ENCODE measurements at regions of chr6 and their contacts with region 1.

Region 1: DNA sequence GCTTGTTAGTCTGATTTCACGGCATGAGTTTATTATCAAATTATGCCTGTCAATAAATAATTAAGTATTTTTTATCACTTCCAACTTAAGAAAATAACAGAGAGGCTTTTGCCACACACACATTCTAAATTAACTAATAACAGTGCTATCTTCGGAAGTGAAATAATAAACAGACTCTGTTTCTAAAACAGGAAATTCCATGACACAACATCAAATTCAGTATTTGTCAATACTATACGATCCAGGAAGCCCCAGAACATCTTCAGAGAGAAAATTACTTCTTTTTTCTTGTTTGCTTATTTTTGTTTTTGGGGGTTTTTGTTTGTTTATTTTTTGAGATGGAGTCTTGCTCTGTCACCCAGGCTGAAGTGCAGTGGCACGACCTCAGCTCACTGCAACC is 150.7 kb upstream of the PRDM1 start:
- DNase-seq: no peak
- H3K4me3 ChIP-seq: no peak overlapping the region
- H3K4me3 Mint-ChIP-seq: no peak overlapping the region
- H3K27ac Mint-ChIP-seq: peak overlapping the region; percentile 49
- H3K4me1 ChIP-seq: peaks cover 24% of the 10 kb centered on the region
- H3K4me1 Mint-ChIP-seq: peaks cover 19% of the 10 kb centered on the region
- H3K27me3 ChIP-seq: no peaks in the 10 kb centered on the region
- H3K27me3 Mint-ChIP-seq: no peaks in the 10 kb centered on the region
- CTCF ChIP-seq: no peak

Region 2: DNA sequence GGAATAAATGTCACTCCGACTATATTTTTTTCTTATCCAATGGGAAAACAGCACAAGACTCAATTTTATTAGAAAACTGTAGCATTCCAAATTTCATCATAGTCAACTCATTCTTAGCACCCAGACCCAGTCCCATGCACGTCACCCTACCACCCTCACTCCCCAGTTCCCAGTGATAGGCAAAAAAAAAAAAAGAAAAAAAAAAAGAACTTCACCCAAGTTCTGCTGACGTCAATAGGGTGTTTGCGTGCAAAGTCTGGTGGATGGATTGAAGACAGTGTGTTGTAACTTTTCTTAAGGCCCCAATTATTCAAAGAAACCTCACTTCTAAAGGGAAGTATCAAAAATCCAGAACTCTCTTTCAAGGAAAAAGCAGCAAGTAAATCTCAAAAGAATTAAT is 63.2 kb before region 1 on chr6:
- CTCF ChIA-PET with region 1: no interaction called
- POLR2A ChIA-PET with region 1: no interaction called
- intact Hi-C with region 1: loop called (anchors 1 kb)
- DNase-seq: no peak
- H3K4me3 ChIP-seq: no peak overlapping the region
- H3K4me3 Mint-ChIP-seq: no peak overlapping the region
- H3K27ac Mint-ChIP-seq: no peak overlapping the region
- H3K4me1 ChIP-seq: peaks cover 33% of the 10 kb centered on the region
- H3K4me1 Mint-ChIP-seq: peaks cover 27% of the 10 kb centered on the region
- H3K27me3 ChIP-seq: no peaks in the 10 kb centered on the region
- H3K27me3 Mint-ChIP-seq: no peaks in the 10 kb centered on the region
- CTCF ChIP-seq: no peak

Region 3: GRCh38 chr6:105967917-105968584 is 32.6 kb after region 1 on chr6:
- CTCF ChIA-PET with region 1: no interaction called
- POLR2A ChIA-PET with region 1: no interaction called
- intact Hi-C with region 1: loop called (anchors 2 kb)
- DNase-seq: no peak
- H3K4me3 ChIP-seq: no peak overlapping the region
- H3K4me3 Mint-ChIP-seq: no peak overlapping the region
- H3K27ac Mint-ChIP-seq: peak overlapping the region; percentile 16
- H3K4me1 ChIP-seq: peaks cover 22% of the 10 kb centered on the region
- H3K4me1 Mint-ChIP-seq: peaks cover 24% of the 10 kb centered on the region
- H3K27me3 ChIP-seq: no peaks in the 10 kb centered on the region
- H3K27me3 Mint-ChIP-seq: no peaks in the 10 kb centered on the region
- CTCF ChIP-seq: no peak

Region 4: GRCh38 chr6:105992315-105992961 is 57.0 kb after region 1 on chr6:
- CTCF ChIA-PET with region 1: no interaction called
- POLR2A ChIA-PET with region 1: no interaction called
- intact Hi-C with region 1: loop called (anchors 5 kb)
- DNase-seq: peak; percentile 75 to 88
- H3K4me3 ChIP-seq: peak overlapping the region; percentile 51
- H3K4me3 Mint-ChIP-seq: peak overlapping the region; percentile 73
- H3K27ac Mint-ChIP-seq: peak overlapping the region; percentile 73
- H3K4me1 ChIP-seq: peaks cover 16% of the 10 kb centered on the region; the same call in 1 of the 2 replicates
- H3K4me1 Mint-ChIP-seq: peaks cover 33% of the 10 kb centered on the region
- H3K27me3 ChIP-seq: no peaks in the 10 kb centered on the region
- H3K27me3 Mint-ChIP-seq: no peaks in the 10 kb centered on the region
- CTCF ChIP-seq: no peak

Region 5: DNA sequence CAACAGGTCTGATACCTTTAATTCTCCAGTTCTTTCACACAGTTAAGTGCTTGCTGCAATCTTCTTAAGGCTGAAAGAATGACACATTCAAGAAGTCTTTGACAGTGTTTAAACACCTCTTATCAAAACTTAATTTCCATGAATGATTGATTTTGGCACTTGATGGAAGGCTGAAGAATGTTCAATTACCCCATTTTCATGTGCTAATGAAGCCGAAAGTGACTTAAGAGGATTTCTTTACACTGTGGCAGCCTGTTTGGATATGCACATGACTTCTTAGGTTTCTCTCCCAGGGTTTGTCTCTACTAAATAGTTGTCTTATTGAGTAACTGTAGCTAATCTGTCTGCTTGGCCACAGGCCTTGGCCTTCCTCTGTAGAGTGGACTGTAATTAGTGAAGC is 69.6 kb after region 1 on chr6:
- CTCF ChIA-PET with region 1: no interaction called
- POLR2A ChIA-PET with region 1: no interaction called
- intact Hi-C with region 1: no loop called
- DNase-seq: no peak
- H3K4me3 ChIP-seq: no peak overlapping the region
- H3K4me3 Mint-ChIP-seq: no peak overlapping the region
- H3K27ac Mint-ChIP-seq: no peak overlapping the region
- H3K4me1 ChIP-seq: peaks cover 18% of the 10 kb centered on the region
- H3K4me1 Mint-ChIP-seq: peaks cover 21% of the 10 kb centered on the region
- H3K27me3 ChIP-seq: no peaks in the 10 kb centered on the region
- H3K27me3 Mint-ChIP-seq: no peaks in the 10 kb centered on the region
- CTCF ChIP-seq: no peak

Region 6: DNA sequence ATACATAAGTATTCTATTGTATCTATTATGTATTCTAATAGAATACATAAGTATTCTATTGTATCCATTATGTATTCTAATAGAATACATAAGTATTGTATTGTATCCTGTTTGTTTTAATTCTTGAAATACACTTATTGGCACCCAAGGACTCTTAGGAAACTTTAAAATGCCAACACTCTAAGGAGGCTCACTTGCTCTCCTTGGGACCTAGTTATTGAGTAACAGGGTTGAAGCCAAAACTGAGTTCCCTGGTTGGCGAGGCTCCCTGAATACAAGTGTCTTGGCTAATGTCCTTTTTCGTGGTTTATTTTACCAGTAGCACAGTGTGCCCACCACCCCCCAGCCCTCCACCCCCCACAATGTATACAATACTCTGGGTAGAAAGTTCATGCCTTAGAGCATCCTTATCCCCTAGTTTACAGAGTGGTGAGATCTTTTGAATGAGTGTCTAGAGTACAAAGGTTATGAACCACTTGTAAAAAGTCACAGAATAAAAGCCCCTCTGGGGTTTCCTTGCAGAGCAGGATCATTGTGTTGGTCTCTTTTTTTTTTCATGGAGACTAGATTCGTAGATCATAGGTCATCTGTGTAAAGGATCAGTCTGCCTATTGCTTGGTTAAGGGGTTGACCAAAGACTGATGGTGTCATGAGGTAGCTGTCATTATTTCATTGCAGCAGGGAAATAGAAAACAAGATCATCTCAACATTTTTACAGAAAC is 118.2 kb after region 1 on chr6:
- CTCF ChIA-PET with region 1: no interaction called
- POLR2A ChIA-PET with region 1: no interaction called
- intact Hi-C with region 1: loop called (anchors 2 kb)
- DNase-seq: no peak
- H3K4me3 ChIP-seq: no peak overlapping the region
- H3K4me3 Mint-ChIP-seq: peak overlapping the region; percentile 56
- H3K27ac Mint-ChIP-seq: peak overlapping the region; percentile 74
- H3K4me1 ChIP-seq: peaks cover 81% of the 10 kb centered on the region
- H3K4me1 Mint-ChIP-seq: peaks cover 57% of the 10 kb centered on the region
- H3K27me3 ChIP-seq: no peaks in the 10 kb centered on the region
- H3K27me3 Mint-ChIP-seq: no peaks in the 10 kb centered on the region
- CTCF ChIP-seq: no peak